AG04449 (cell line): ENCODE measurements at regions of chr11 and their contacts with region 1.

Region 1: GRCh38 chr11:65013692-65014145 is 241 bp upstream of the ARL2 start:
- DNase-seq: peak; percentile 23
- H3K4me3 ChIP-seq: peak overlapping the region; percentile 87
- CTCF ChIP-seq: peak; percentile 80

Region 2: DNA sequence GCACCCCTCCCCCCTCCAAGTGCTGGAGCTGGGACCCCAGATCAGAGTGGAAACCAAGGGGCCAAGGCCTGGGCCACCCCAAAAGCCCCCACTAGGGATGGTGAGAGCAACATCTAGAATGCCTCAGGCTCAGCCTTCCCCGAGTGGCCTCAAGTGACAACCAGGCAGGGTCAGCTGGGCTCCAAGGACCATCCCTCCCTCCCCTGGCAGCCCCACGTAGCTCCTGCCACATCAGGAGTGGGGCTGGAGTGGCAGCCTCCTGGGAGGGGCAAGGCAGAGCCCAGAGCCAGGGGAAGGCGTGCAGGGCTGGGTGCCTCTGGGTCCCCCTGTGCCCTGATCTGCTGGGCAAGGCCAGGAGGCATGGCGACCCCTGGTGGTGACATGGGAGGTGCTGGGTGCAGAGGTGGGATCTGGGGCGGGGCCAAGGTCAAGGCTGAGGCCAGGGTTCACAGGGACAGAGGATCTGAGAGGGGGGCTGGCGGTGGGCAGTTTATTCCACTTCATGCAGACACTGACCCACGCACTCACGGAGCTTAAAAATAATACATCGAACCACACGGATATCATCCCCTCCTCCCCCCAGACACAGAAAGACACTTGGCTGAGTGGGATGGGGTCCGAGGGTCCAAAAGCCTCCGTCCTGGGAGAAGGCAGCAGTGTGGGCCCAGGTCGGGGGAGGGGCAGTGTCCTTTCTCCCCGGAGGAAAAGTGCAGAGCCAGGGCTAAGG is 119.5 kb before region 1 on chr11:
- CTCF ChIA-PET with region 1: interaction called, 15 read pairs
- POLR2A ChIA-PET with region 1: no interaction called
- DNase-seq: no peak
- H3K4me3 ChIP-seq: no peak overlapping the region
- CTCF ChIP-seq: peak; percentile 96

Region 3: DNA sequence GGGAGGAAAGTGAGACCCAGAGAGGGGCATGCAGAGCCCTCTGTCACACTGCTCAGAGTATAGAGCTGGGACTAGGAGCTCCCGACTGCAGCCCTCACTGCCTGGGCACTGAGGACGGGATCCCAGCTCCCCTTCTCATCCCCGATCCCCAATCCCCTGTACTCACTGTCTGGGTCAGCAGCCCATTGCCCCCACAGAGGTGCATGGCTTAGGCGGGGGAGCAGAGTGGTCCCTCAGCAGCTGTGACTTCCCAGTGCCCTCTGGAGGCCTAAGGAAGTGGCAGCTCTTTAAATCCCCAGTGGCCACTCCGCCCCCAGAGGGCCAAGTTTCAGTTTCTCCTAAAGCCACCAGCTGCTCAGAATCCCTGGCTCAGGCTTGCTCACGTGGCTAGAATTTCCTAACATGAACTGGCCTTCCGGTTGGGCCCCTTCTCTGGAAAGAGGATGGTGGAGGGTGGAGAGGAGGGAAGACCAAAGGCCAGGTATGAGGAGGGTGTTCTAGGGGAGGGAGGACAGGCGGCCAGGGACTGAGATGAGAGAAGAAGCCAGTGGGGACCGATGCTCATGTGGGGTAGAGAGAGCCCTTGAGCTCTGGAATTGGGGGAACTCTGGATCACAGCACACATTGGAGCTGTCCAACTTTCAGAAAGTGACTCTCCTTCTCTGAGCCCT is 16.9 kb before region 1 on chr11 and contains the start of gene BATF2:
- CTCF ChIA-PET with region 1: interaction called, 179 read pairs
- POLR2A ChIA-PET with region 1: interaction called, 3 read pairs
- DNase-seq: no peak
- H3K4me3 ChIP-seq: peak within 1 kb of the TSS; percentile 40
- CTCF ChIP-seq: peak; percentile 52

Region 4: DNA sequence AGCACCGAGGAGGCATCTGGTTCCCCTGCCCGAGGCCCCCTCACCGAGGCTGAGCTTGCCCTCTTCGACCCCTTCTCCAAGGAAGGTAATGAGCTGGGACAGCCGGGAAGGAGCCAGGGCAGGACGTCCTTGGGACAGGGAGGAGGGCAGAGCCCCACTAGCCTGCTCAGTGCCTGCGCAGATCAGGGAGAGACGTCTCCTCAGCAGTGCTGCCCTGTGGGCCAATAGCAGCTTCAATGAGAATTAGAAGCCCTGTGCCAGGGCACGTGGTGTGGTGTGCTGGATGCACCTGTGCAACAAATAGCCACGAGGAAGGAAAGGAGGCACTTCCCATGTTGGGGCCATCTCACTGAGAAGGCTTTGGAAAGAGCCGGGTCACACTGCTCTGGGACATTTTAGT is 21.9 kb after region 1 on chr11:
- CTCF ChIA-PET with region 1: interaction called, 140 read pairs
- POLR2A ChIA-PET with region 1: interaction called, 3 read pairs
- DNase-seq: no peak
- H3K4me3 ChIP-seq: no peak overlapping the region
- CTCF ChIP-seq: no peak

Region 5: GRCh38 chr11:65083834-65084597 is 70.3 kb after region 1 on chr11 and contains the starts of genes CDCA5 and ZFPL1:
- CTCF ChIA-PET with region 1: interaction called, 12 read pairs
- POLR2A ChIA-PET with region 1: no interaction called
- DNase-seq: peak; percentile 59
- H3K4me3 ChIP-seq: peak within 1 kb of the TSS; percentile 97
- CTCF ChIP-seq: no peak

Region 6: GRCh38 chr11:65117216-65118096 is 103.7 kb after region 1 on chr11 and contains the start of gene ZNHIT2:
- CTCF ChIA-PET with region 1: interaction called, 70 read pairs
- POLR2A ChIA-PET with region 1: no interaction called
- DNase-seq: peak; percentile 84
- H3K4me3 ChIP-seq: peak within 1 kb of the TSS; percentile 94
- CTCF ChIP-seq: peak; percentile 87